ENCODE measurements at regions of chr4 and their contacts with region 1.

Region 1: DNA sequence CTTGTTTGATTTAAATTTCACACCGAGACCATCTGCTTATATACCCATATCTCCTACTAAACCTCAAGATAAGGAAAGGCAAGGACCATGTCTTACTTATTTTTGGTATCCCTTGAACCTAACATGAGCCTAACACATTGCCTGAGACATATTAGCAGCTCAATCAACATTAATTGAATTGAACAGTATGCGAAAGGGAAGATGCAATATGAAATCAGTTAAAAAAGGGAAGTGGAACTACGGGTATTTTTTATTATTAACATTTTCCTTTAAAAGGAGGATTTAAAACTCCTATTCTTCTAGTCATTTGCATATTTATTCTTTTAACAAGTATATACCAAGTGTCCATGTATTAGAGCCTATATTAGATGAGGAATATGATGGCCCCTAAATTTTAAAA is 197.0 kb downstream of the CAMK2D start:
- DNase-seq: no peak
- ATAC-seq: peak; percentile 45
- H3K4me3 ChIP-seq: peak overlapping the region; percentile 12; the same call in 1 of the 2 replicates
- H3K27ac ChIP-seq: peak overlapping the region; percentile 60
- H3K4me1 ChIP-seq: peaks cover 38% of the 10 kb centered on the region
- H3K27me3 ChIP-seq: no peaks in the 10 kb centered on the region
- CTCF ChIP-seq: no peak
- EP300 ChIP-seq: no peak
- POLR2A ChIP-seq: no peak
- RAD21 ChIP-seq: no peak

Region 2: DNA sequence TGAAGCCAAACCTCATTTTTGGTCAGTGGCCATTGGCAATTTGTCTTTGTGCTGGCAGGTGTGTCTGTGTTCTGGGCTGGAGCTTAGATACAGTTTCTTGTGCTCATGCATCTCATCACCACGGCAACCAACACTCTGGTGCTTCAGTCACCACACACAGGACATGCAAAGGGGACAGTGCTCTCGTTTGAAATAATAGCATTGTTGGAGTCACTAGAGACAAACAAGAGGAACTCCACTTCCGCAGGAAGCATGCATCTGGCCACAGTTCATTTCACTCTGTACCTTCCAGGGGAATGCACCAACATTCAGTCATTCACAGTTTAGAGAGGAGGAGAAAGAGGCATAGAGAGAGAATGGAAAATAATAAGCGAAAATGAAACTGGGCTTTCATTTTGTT is 247.6 kb before region 1 on chr4:
- CTCF ChIA-PET with region 1: no interaction called
- POLR2A ChIA-PET with region 1: no interaction called
- RAD21 ChIA-PET with region 1: no interaction called
- SMC1A ChIA-PET with region 1: no interaction called
- in situ Hi-C with region 1: no loop called
- intact Hi-C with region 1: no loop called
- DNase-seq: peak; percentile 75
- ATAC-seq: peak; percentile 98
- H3K4me3 ChIP-seq: no peak overlapping the region; the same call in 1 of the 2 replicates
- H3K27ac ChIP-seq: 0 out of 2 replicates have a peak overlapping the region, but pooled peaks have one; percentile 4
- H3K4me1 ChIP-seq: peaks cover 7% of the 10 kb centered on the region; the same call in 1 of the 2 replicates
- H3K27me3 ChIP-seq: no peaks in the 10 kb centered on the region
- CTCF ChIP-seq: no peak
- EP300 ChIP-seq: no peak
- POLR2A ChIP-seq: no peak
- RAD21 ChIP-seq: no peak

Region 3: DNA sequence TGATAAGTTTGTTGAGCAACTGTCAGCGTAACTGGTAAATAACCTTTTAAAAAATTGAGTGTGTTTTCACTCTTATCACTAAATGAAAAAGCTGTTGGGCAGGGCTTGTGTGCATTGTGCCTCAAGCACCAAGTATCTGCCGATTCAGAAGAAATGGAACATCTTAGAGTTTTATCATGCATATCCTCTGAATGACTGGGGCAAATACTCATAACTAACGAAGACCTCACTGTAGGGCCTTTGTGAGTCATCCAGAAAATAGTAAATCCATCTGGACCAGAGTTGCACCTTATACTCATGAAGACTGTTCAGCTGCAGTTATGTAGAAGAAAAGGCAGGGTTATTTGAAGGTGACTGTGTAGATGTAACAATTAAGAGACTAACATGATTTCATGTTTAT is 25.1 kb before region 1 on chr4:
- CTCF ChIA-PET with region 1: interaction called, 4 read pairs
- POLR2A ChIA-PET with region 1: no interaction called
- RAD21 ChIA-PET with region 1: interaction called, 16 read pairs
- SMC1A ChIA-PET with region 1: interaction called, 18 read pairs
- in situ Hi-C with region 1: no loop called
- intact Hi-C with region 1: no loop called
- DNase-seq: no peak
- ATAC-seq: peak; percentile 92
- H3K4me3 ChIP-seq: no peak overlapping the region
- H3K27ac ChIP-seq: no peak overlapping the region
- H3K4me1 ChIP-seq: no peaks in the 10 kb centered on the region
- H3K27me3 ChIP-seq: no peaks in the 10 kb centered on the region
- CTCF ChIP-seq: no peak
- EP300 ChIP-seq: no peak
- POLR2A ChIP-seq: no peak
- RAD21 ChIP-seq: no peak

Region 4: GRCh38 chr4:113584407-113585150 is 20.1 kb after region 1 on chr4:
- CTCF ChIA-PET with region 1: interaction called, 12 read pairs
- POLR2A ChIA-PET with region 1: interaction called, 5 read pairs
- RAD21 ChIA-PET with region 1: interaction called, 4 read pairs
- SMC1A ChIA-PET with region 1: interaction called, 151 read pairs
- in situ Hi-C with region 1: no loop called
- intact Hi-C with region 1: no loop called
- DNase-seq: no peak
- ATAC-seq: no peak
- H3K4me3 ChIP-seq: no peak overlapping the region
- H3K27ac ChIP-seq: 0 out of 2 replicates have a peak overlapping the region, but pooled peaks have one; percentile 10
- H3K4me1 ChIP-seq: peaks cover 6% of the 10 kb centered on the region; the same call in 1 of the 2 replicates
- H3K27me3 ChIP-seq: no peaks in the 10 kb centered on the region
- CTCF ChIP-seq: no peak
- EP300 ChIP-seq: no peak
- POLR2A ChIP-seq: no peak
- RAD21 ChIP-seq: no peak

Region 5: GRCh38 chr4:113618205-113618604 is 53.7 kb after region 1 on chr4:
- CTCF ChIA-PET with region 1: interaction called, 6 read pairs
- POLR2A ChIA-PET with region 1: interaction called, 4 read pairs
- RAD21 ChIA-PET with region 1: interaction called, 74 read pairs
- SMC1A ChIA-PET with region 1: interaction called, 18 read pairs
- in situ Hi-C with region 1: no loop called
- intact Hi-C with region 1: no loop called
- DNase-seq: no peak
- ATAC-seq: peak; percentile 63
- H3K4me3 ChIP-seq: no peak overlapping the region
- H3K27ac ChIP-seq: no peak overlapping the region
- H3K4me1 ChIP-seq: peaks cover 4% of the 10 kb centered on the region; the same call in 1 of the 2 replicates
- H3K27me3 ChIP-seq: no peaks in the 10 kb centered on the region
- CTCF ChIP-seq: no peak
- EP300 ChIP-seq: peak; percentile 78 to 80; a peak in 3 of 4 replicates
- POLR2A ChIP-seq: no peak
- RAD21 ChIP-seq: no peak

Region 6: GRCh38 chr4:113673450-113673849 is 109.0 kb after region 1 on chr4:
- CTCF ChIA-PET with region 1: interaction called, 6 read pairs
- POLR2A ChIA-PET with region 1: no interaction called
- RAD21 ChIA-PET with region 1: interaction called, 3 read pairs
- SMC1A ChIA-PET with region 1: interaction called, 14 read pairs
- in situ Hi-C with region 1: no loop called
- intact Hi-C with region 1: no loop called
- DNase-seq: no peak
- ATAC-seq: peak; percentile 98
- H3K4me3 ChIP-seq: no peak overlapping the region
- H3K27ac ChIP-seq: no peak overlapping the region
- H3K4me1 ChIP-seq: no peaks in the 10 kb centered on the region
- H3K27me3 ChIP-seq: no peaks in the 10 kb centered on the region
- CTCF ChIP-seq: peak in 2 of 3 experiments; percentile 6 to 15; a peak in 2 of 6 replicates
- EP300 ChIP-seq: no peak
- POLR2A ChIP-seq: no peak
- RAD21 ChIP-seq: 0 out of 2 replicates have a peak, but pooled peaks have one; percentile 24

Region 7: DNA sequence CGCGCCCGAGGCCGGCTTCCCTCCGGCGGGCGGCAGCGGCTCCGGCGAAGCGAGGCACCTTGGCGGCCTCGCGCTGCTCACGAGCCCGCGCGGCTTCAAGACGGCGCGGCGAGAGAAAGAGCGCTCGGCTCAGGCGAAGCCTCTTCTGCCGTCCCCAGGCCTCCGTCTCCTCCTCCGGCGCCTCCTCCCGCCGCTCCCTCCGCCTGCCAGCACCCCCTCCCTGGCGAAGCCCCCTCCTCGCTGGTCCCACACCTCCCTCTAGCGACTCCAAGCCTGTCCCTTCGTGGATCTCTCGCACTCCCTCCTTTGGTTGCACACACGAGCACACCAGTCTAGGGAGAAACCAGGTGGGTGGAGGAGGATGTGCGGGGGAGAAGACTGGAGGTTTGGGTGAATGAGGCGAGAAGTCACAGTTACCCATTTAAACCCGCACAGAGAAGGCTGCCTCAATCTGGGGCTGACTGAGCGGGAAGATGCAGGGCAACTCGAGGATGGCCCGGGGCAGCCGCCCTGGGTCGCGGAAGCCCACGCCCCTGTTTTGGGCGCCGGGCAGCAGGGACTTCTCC is 197.2 kb after region 1 on chr4 and contains the start of gene CAMK2D:
- CTCF ChIA-PET with region 1: interaction called, 3 read pairs
- POLR2A ChIA-PET with region 1: interaction called, 7 read pairs
- RAD21 ChIA-PET with region 1: interaction called, 30 read pairs
- SMC1A ChIA-PET with region 1: interaction called, 21 read pairs
- in situ Hi-C with region 1: loop called (anchors 5 kb)
- intact Hi-C with region 1: no loop called
- DNase-seq: peak; percentile 81
- ATAC-seq: peak; percentile 56
- H3K4me3 ChIP-seq: peak within 1 kb of the TSS; percentile 99
- H3K27ac ChIP-seq: peak within 1 kb of the TSS; percentile 98
- H3K4me1 ChIP-seq: no peaks in the 10 kb centered on the region
- H3K27me3 ChIP-seq: no peaks in the 10 kb centered on the region
- CTCF ChIP-seq: peak; percentile 60 to 95 (median 69)
- EP300 ChIP-seq: peak in 1 of 2 experiments; percentile 33; a peak in 2 of 4 replicates
- POLR2A ChIP-seq: no peak
- RAD21 ChIP-seq: peak; percentile 89
- polyA plus RNA-seq, gene CAMK2D: 6.9 to 10.2 TPM